Panc1 (cell line): ENCODE measurements at regions of chrX and their contacts with region 1.

Region 1: GRCh38 chrX:65406532-65406931 is 128.1 kb downstream of the LAS1L start:
- DNase-seq: no peak
- ATAC-seq: peak; percentile 91
- H3K4me3 ChIP-seq: peak overlapping the region; percentile 43 to 44
- H3K27ac ChIP-seq: no peak overlapping the region
- H3K4me1 ChIP-seq: no peaks in the 10 kb centered on the region
- H3K27me3 ChIP-seq: no peaks in the 10 kb centered on the region
- CTCF ChIP-seq: no peak

Region 2: GRCh38 chrX:64782923-64783322 is 623.6 kb before region 1 on chrX:
- CTCF ChIA-PET with region 1: no interaction called
- POLR2A ChIA-PET with region 1: no interaction called
- in situ Hi-C with region 1: no loop called
- intact Hi-C with region 1: no loop called
- DNase-seq: no peak
- ATAC-seq: no peak
- H3K4me3 ChIP-seq: no peak overlapping the region
- H3K27ac ChIP-seq: no peak overlapping the region
- H3K4me1 ChIP-seq: no peaks in the 10 kb centered on the region
- H3K27me3 ChIP-seq: no peaks in the 10 kb centered on the region
- CTCF ChIP-seq: no peak

Region 3: DNA sequence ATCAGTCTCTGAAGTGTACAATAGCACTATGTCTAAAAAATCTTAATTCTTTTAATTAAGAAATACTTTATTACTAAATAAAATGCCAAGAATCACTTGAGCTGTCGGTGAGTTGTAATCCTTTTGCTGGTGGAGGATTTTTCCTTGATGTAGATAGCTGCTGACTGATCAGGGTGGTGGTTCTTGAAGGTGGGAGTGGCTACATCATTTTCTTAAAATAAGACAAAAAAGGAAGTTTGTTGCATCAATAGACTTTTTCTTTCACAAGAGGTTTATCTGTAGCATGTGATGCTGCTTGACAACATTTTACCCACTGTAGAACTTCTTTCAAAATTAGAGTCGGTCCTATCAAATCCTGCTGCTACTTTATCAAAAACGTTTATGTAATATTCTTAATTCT is 361.5 kb before region 1 on chrX:
- CTCF ChIA-PET with region 1: no interaction called
- POLR2A ChIA-PET with region 1: no interaction called
- in situ Hi-C with region 1: no loop called
- intact Hi-C with region 1: loop called (anchors 10 kb)
- DNase-seq: no peak
- ATAC-seq: no peak
- H3K4me3 ChIP-seq: no peak overlapping the region
- H3K27ac ChIP-seq: no peak overlapping the region
- H3K4me1 ChIP-seq: no peaks in the 10 kb centered on the region
- H3K27me3 ChIP-seq: no peaks in the 10 kb centered on the region
- CTCF ChIP-seq: no peak

Region 4: DNA sequence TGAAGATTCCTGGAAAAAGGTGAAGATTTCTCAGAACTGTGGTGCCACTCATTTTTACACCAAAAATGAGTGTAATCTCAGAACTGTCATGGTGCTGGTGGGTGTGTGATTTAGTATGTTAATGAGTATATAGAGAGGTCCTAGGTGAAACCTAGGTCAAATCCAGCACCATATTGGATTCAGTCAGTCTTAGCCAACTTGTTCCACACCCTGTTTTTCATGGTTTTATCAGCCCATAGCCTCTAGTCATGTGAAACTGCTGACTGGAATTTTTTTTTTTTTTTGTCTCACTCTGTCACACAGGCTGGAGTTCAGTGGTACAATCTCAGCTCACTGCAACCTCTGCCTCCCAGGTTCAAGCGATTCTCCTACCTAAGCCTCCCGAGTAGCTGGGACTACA is 70.0 kb after region 1 on chrX:
- CTCF ChIA-PET with region 1: no interaction called
- POLR2A ChIA-PET with region 1: no interaction called
- in situ Hi-C with region 1: no loop called
- intact Hi-C with region 1: loop called (anchors 10 kb)
- DNase-seq: no peak
- ATAC-seq: no peak
- H3K4me3 ChIP-seq: no peak overlapping the region
- H3K27ac ChIP-seq: no peak overlapping the region
- H3K4me1 ChIP-seq: no peaks in the 10 kb centered on the region
- H3K27me3 ChIP-seq: no peaks in the 10 kb centered on the region
- CTCF ChIP-seq: no peak

Region 5: GRCh38 chrX:65488501-65488900 is 82.0 kb after region 1 on chrX:
- CTCF ChIA-PET with region 1: no interaction called
- POLR2A ChIA-PET with region 1: no interaction called
- in situ Hi-C with region 1: no loop called
- intact Hi-C with region 1: no loop called
- DNase-seq: no peak
- ATAC-seq: no peak
- H3K4me3 ChIP-seq: no peak overlapping the region
- H3K27ac ChIP-seq: no peak overlapping the region
- H3K4me1 ChIP-seq: no peaks in the 10 kb centered on the region
- H3K27me3 ChIP-seq: no peaks in the 10 kb centered on the region
- CTCF ChIP-seq: no peak

Region 6: DNA sequence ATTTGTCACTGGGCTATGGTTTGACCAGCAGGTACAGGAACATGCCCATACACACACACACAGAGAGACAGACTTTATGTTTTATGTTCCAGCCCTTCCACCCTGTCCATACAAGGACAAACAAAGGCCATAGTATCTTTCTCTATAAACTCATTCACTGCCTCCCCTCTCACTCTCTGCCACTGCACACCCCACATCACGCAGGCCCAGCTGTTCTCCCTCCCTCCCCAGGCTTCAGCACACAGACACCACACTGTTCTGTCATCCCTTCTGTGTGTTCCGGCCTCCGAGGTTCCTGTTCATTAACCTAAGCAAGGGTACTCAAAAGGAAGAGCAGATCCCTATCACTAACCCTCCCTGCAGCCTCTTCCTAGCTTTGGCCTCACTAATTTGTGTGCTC is 110.2 kb after region 1 on chrX:
- CTCF ChIA-PET with region 1: no interaction called
- POLR2A ChIA-PET with region 1: interaction called, 10 read pairs
- in situ Hi-C with region 1: no loop called
- intact Hi-C with region 1: no loop called
- DNase-seq: no peak
- ATAC-seq: no peak
- H3K4me3 ChIP-seq: no peak overlapping the region
- H3K27ac ChIP-seq: no peak overlapping the region
- H3K4me1 ChIP-seq: no peaks in the 10 kb centered on the region
- H3K27me3 ChIP-seq: no peaks in the 10 kb centered on the region
- CTCF ChIP-seq: no peak